MCF 10A (cell line): ENCODE measurements at regions of chr1 and their contacts with region 1.

Region 1: DNA sequence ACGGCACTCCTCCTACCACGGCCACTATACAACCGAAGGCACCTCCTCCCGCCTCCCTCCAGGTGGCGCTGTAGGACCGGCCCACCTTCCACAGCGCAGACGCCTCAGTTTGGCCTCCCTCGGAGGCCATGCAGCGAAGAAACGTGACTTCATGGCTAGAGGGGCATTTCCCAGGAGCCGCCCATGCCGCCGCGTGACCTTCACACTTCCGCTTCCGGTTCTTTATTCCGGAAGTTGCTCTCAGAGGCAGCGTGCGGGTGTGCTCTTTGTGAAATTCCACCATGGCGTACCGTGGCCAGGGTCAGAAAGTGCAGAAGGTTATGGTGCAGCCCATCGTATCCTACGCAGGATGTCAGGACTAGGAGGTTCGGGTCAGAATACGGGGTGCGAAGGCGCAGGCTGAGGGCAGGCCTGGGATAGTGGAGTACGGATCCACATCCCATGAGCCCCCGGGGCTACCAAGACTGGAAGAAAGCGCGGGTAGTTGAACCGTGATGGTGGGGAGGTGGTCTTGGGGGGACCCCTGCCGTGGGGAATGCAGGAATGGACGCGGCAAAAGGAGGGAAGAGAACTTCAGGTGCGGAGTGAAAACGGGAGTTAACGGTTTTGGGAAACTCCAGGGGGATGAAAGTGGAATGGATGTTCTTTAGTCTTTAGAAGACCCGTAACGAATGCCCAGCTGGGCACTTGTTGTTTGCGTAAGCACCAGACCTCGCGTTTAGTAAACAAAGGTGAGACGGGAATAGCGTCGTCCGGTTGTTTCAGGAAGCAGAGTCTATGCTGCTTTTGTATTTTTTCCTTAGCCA is at the start of gene SNRPE:
- DNase-seq: peak; percentile 100
- H3K4me3 Mint-ChIP-seq: peak within 1 kb of the TSS; percentile 100
- H3K27ac Mint-ChIP-seq: peak within 1 kb of the TSS; percentile 100
- H3K4me1 Mint-ChIP-seq: peaks cover 43% of the 10 kb centered on the region
- H3K27me3 Mint-ChIP-seq: no peaks in the 10 kb centered on the region
- CTCF ChIP-seq: peak; percentile 100
- total RNA-seq, gene SNRPE: 358 and 423 TPM in 2 replicates

Region 2: GRCh38 chr1:203428981-203429599 is 432.5 kb before region 1 on chr1:
- CTCF ChIA-PET with region 1: no interaction called
- POLR2A ChIA-PET with region 1: no interaction called
- intact Hi-C with region 1: no loop called
- DNase-seq: no peak
- H3K4me3 Mint-ChIP-seq: no peak overlapping the region
- H3K27ac Mint-ChIP-seq: no peak overlapping the region
- H3K4me1 Mint-ChIP-seq: no peaks in the 10 kb centered on the region
- H3K27me3 Mint-ChIP-seq: peaks cover 100% of the 10 kb centered on the region
- CTCF ChIP-seq: no peak

Region 3: DNA sequence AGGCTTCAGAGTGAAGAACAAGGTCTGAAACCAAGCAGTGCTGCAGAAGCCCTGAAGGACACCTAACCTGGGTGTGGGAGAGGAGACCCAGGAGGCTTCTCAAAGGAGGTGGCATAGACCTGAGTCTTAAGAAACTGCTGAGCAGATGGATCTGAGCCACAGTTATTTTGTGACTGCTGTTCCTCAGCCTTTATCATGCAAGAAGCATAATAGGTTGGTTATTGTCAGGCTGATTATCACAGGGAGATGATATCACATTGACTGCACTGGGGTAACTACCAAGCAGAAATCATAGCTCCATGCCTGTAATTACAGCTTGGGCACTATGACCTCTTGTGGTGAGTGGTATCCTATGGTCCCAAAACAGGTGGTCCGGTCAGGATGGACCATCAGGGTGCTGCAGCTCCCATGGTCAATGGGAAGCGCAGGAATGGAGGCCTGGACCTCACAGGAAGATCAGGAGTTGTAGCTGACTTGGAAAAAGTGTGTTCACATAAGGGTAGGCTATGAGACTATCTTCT is 246.5 kb before region 1 on chr1:
- CTCF ChIA-PET with region 1: no interaction called
- POLR2A ChIA-PET with region 1: no interaction called
- intact Hi-C with region 1: no loop called
- DNase-seq: no peak
- H3K4me3 Mint-ChIP-seq: no peak overlapping the region
- H3K27ac Mint-ChIP-seq: no peak overlapping the region
- H3K4me1 Mint-ChIP-seq: no peaks in the 10 kb centered on the region
- H3K27me3 Mint-ChIP-seq: no peaks in the 10 kb centered on the region
- CTCF ChIP-seq: no peak

Region 4: GRCh38 chr1:203795441-203796235 is 65.9 kb before region 1 on chr1 and contains the starts of genes ZBED6 and ZC3H11A:
- CTCF ChIA-PET with region 1: no interaction called
- POLR2A ChIA-PET with region 1: interaction called, 17 read pairs
- intact Hi-C with region 1: no loop called
- DNase-seq: peak; percentile 100
- H3K4me3 Mint-ChIP-seq: peak within 1 kb of the TSS; percentile 86
- H3K27ac Mint-ChIP-seq: peak within 1 kb of the TSS; percentile 98
- H3K4me1 Mint-ChIP-seq: peaks cover 44% of the 10 kb centered on the region
- H3K27me3 Mint-ChIP-seq: no peaks in the 10 kb centered on the region
- CTCF ChIP-seq: no peak
- total RNA-seq, gene ZBED6: 68.2 and 69.8 TPM in 2 replicates
- total RNA-seq, gene ZC3H11A: 148 and 156 TPM in 2 replicates

Region 5: GRCh38 chr1:203843435-203843834 is 18.1 kb before region 1 on chr1:
- CTCF ChIA-PET with region 1: interaction called, 5 read pairs
- POLR2A ChIA-PET with region 1: interaction called, 11 read pairs
- intact Hi-C with region 1: no loop called
- DNase-seq: no peak
- H3K4me3 Mint-ChIP-seq: no peak overlapping the region
- H3K27ac Mint-ChIP-seq: no peak overlapping the region
- H3K4me1 Mint-ChIP-seq: peaks cover 6% of the 10 kb centered on the region
- H3K27me3 Mint-ChIP-seq: no peaks in the 10 kb centered on the region
- CTCF ChIP-seq: no peak

Region 6: DNA sequence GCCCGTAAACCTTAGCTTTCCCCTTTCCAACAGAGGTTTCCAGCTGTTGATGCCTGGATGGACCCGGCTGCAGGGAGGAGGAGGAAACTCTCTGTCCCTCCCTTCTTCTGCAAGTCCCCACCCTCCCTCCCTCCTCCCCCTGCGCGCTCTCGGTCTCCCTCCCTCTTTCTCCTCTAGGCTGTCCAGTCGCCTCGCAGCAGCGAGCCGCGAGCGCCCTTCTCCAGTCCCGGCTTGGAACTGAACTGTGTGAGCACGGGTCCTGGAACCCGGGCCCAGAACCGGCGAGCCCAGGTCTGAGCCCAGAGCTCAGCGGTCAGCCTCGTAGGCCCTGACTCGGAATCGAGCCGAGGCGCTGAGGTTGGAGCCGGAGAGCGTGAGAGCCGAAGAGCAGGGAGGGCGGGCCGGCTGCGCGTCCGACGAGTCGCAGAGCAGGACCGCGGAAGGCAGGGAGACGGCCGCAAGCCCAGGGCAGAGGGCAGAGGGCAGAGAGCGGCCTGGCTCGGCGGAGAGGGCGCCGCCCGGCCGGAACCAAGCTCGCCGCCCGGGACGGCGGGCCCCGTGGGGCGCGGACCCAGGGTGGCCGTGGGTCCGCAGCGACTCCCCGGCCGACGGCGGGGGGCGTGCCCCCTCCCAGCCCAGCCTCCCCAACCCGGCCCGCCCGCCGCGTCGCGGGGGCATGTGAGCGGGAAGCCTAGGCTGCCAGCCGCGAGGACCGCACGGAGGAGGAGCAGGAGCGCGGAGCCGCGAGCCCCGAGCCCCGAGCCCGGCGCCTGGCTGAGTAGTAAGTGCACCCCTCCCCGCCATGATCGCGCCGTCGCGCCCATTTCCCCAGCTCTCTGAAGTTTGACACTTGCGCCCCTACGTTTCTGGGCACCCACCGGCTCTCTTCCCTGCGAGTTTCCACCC is 211.6 kb after region 1 on chr1 and contains the start of gene SOX13:
- CTCF ChIA-PET with region 1: interaction called, 32 read pairs
- POLR2A ChIA-PET with region 1: interaction called, 70 read pairs
- intact Hi-C with region 1: no loop called
- DNase-seq: peak; percentile 98
- H3K4me3 Mint-ChIP-seq: peak within 1 kb of the TSS; percentile 75
- H3K27ac Mint-ChIP-seq: peak within 1 kb of the TSS; percentile 55
- H3K4me1 Mint-ChIP-seq: peaks cover 20% of the 10 kb centered on the region
- H3K27me3 Mint-ChIP-seq: no peaks in the 10 kb centered on the region
- CTCF ChIP-seq: peak; percentile 34
- total RNA-seq, gene SOX13: 23.7 and 32.8 TPM in 2 replicates

Region 7: GRCh38 chr1:204198151-204198994 is 336.8 kb after region 1 on chr1:
- CTCF ChIA-PET with region 1: interaction called, 6 read pairs
- POLR2A ChIA-PET with region 1: no interaction called
- intact Hi-C with region 1: loop called (anchors 2 kb)
- DNase-seq: peak; percentile 83
- H3K4me3 Mint-ChIP-seq: no peak overlapping the region
- H3K27ac Mint-ChIP-seq: no peak overlapping the region
- H3K4me1 Mint-ChIP-seq: peaks cover 6% of the 10 kb centered on the region
- H3K27me3 Mint-ChIP-seq: peaks cover 18% of the 10 kb centered on the region
- CTCF ChIP-seq: peak; percentile 37